ENCODE measurements at regions of chr3 and their contacts with region 1.

Region 1: GRCh38 chr3:50337191-50337841 is 3.3 kb downstream of the RASSF1 start:
- DNase-seq: peak; percentile 99
- ATAC-seq: peak; percentile 88
- H3K4me3 ChIP-seq: peak overlapping the region; percentile 89
- H3K27ac ChIP-seq: peak overlapping the region; percentile 72
- H3K4me1 ChIP-seq: peaks cover 32% of the 10 kb centered on the region
- H3K27me3 ChIP-seq: no peaks in the 10 kb centered on the region
- CTCF ChIP-seq: no peak

Region 2: DNA sequence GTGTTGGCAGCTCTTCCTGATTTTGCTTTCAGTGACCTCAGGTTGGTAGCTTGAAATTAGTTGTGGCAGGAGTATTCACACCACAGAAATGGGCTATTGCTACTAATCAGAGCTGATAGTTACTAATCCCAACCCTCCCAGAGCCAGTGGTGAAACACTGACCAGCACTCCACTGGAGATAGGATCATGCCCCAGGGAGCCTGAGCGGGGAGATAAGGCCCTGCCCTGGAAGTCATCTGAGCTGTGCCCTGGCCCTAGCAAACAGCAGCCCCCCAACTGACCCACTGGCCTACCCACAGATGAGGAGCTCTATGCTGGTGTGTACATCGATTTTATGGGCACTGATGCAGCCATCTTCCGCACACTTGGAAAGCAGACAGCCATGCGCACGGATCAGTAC is 155.3 kb before region 1 on chr3:
- CTCF ChIA-PET with region 1: no interaction called
- POLR2A ChIA-PET with region 1: interaction called, 28 read pairs
- intact Hi-C with region 1: no loop called
- DNase-seq: no peak
- ATAC-seq: no peak
- H3K4me3 ChIP-seq: no peak overlapping the region
- H3K27ac ChIP-seq: no peak overlapping the region
- H3K4me1 ChIP-seq: peaks cover 6% of the 10 kb centered on the region; the same call in 1 of the 2 replicates
- H3K27me3 ChIP-seq: no peaks in the 10 kb centered on the region
- CTCF ChIP-seq: no peak